Cardiac septum (tissue), 1 donor: ENCODE measurements at regions of chr19 and their contacts with region 1.

Region 1: DNA sequence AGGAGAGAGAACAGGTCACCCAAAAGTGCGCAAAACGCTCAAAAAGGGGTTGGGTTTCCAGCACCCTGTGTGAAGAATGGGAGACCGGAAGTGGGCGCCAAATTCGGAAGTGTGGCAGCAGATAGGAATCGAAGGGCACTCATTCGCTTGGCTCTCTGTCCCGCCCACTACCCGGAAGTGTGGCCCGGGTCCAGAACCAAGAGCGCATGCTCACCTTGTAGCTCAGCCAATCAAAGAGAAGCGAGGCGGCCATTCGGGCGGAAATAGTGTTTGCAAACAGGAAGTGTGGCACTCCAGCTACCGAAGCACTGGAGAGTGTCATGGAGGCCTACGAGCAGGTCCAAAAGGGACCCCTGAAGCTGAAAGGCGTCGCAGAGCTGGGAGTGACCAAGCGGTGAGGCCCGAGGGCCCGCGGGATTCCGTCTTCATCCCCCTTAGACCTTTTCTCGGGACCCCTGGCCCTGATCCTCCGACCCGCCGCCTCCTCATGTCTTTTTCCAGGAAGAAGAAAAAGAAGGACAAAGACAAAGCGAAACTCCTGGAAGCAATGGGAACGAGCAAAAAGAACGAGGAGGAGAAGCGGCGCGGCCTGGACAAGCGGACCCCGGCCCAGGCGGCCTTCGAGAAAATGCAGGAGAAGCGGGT is at the start of gene FAM32A:
- DNase-seq: peak; percentile 99
- total RNA-seq, gene FAM32A: 36.9 TPM

Region 2: DNA sequence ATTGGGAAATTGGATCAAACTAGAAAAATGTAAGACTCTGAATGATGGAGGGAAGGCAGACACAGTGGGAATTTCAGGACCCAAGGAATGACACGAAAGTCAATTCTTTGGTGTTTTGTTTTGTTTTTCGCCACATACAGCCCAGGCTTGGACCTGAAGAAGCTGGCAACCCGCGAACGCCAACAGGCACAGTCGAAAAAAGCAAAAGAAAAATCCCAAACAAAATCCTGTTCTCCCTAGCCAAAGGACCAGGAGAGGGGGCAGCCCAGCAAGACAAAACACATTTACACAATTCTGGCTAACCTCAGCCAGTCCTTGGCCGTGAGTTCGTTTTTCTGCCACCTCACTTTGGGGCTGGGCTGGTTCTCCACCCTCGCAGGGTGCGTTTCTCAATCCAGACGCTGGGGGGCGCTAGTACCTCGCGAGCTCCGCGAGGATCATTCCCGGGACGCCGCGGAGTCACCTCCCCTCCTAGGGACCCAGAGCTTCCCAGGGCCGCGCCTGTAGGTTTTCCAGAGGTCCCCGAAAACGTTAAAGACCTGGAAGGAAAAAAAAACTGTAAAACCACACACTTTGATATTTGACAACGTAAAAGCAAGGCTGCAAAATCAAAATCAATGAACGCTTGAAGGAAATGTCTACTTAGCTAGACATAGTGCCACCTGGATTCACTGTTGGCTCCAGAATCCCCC is 143.8 kb before region 1 on chr19:
- intact Hi-C with region 1: loop called (anchors 1 kb)
- DNase-seq: peak; percentile 93